ENCODE measurements at regions of chr6 and their contacts with region 1.

Region 1: GRCh38 chr6:110039364-110039980 is 61.4 kb downstream of the GPR6 start:
- DNase-seq: peak; percentile 63 to 89 (median 79)
- ATAC-seq: peak; percentile 70
- H3K4me3 ChIP-seq: peak overlapping the region; percentile 49 to 57
- H3K4me3 Mint-ChIP-seq: peak overlapping the region; percentile 89
- H3K27ac ChIP-seq: peak overlapping the region; percentile 39 to 75
- H3K27ac Mint-ChIP-seq: peak overlapping the region; percentile 95
- H3K4me1 ChIP-seq: peaks cover 9% of the 10 kb centered on the region
- H3K4me1 Mint-ChIP-seq: peaks cover 22% of the 10 kb centered on the region
- H3K27me3 ChIP-seq: no peaks in the 10 kb centered on the region
- H3K27me3 Mint-ChIP-seq: no peaks in the 10 kb centered on the region
- CTCF ChIP-seq: peak; percentile 75

Region 2: DNA sequence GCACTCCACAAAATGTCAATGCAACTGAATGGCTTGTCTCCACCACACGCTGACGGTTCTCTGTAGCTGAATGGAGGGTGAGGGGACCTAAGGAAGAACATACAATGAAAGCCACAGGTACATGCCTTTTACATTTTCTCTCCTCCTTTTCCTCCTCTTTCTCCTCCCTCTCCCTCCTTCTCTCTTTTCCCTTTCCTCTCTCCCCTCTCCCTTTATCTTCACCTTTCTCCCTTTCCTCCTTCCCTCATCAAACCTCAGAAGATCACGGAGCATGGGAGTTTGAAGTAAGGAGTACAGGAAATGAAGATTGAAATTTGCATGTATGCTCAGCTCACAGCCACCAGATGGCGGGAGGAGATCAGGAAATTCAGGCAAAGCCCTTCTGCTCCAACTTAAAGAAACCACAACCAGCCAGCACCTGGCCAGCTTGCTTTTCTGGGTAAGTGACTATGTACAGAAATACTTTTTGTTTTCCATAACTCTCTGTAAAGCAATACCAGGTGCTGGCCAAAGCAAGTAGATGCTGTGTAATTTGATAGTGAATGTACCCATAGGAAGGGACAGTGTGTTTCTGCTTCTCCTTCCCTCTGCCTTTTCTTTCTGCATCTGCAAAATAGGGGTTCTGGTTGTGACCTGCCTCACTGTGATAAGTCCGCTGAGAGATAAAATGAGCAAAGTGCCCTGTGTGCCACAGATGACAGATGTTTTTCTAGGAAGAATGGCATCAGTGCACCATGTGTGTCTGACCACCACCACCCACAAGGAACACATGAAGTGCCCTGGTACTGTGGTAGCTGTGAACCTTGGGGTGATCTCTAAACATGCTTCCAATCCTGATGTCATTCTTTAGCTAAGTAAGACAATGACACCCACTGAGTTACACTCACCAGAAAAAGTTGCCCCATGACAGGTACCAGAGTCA is 1497.4 kb before region 1 on chr6:
- CTCF ChIA-PET with region 1: no interaction called
- POLR2A ChIA-PET with region 1: no interaction called
- intact Hi-C with region 1: loop called in 1 of 2 experiments (anchors 5 kb)
- DNase-seq: peak; percentile 39 to 87 (median 69)
- ATAC-seq: peak; percentile 92
- H3K4me3 ChIP-seq: no peak overlapping the region
- H3K4me3 Mint-ChIP-seq: no peak overlapping the region
- H3K27ac ChIP-seq: no peak overlapping the region
- H3K27ac Mint-ChIP-seq: no peak overlapping the region
- H3K4me1 ChIP-seq: peaks cover 12% of the 10 kb centered on the region
- H3K4me1 Mint-ChIP-seq: peaks cover 16% of the 10 kb centered on the region
- H3K27me3 ChIP-seq: no peaks in the 10 kb centered on the region
- H3K27me3 Mint-ChIP-seq: no peaks in the 10 kb centered on the region
- CTCF ChIP-seq: peak; percentile 95

Region 3: DNA sequence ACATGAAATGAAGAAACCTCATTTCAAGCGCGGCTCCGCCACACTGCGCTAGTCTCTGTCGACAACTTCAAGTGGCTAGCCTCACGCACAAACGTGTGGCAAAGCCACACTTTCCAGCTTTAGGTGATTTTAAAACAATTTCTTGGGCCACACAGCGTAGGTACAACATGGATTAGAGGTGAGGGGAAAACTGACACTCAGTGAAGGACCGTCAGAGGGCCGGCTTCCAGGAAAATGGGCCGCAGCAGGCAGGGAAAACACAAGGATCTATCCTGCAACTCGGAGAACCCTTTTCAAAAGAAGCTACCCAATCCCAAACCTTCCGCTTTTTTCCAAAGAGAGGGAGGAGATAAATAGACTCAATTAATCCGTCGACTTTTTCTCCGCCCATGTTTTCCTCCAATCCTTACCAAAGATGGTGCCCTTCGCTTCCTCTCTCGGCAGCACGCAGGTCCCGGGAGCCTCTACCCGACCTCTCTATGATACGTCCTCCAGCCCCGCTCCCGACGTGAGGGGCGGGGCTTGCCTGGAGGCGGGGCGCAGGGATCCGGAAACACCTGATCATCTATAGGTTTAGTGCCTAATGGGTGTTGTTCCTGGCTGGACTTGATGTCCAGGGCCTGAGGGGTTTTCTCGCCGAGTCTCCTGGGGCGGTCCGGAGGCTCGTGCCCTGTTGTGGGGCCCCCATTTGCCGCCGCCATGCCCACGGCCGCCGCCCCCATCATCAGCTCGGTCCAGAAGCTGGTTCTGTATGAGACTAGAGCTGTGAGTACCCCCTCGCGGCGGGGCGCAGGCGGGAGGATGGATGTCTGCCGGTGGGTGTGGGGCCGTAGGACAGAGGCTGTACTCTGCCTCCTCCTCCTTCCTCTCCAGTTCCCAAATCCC is 348.5 kb before region 1 on chr6 and contains the starts of genes AK9 and FIG4:
- CTCF ChIA-PET with region 1: interaction called, 18 read pairs
- POLR2A ChIA-PET with region 1: interaction called, 12 read pairs
- intact Hi-C with region 1: no loop called
- DNase-seq: peak; percentile 68 to 93 (median 90)
- ATAC-seq: peak; percentile 96
- H3K4me3 ChIP-seq: peak within 1 kb of the TSS; percentile 85 to 91
- H3K4me3 Mint-ChIP-seq: peak within 1 kb of the TSS; percentile 93
- H3K27ac ChIP-seq: peak within 1 kb of the TSS; percentile 81 to 91
- H3K27ac Mint-ChIP-seq: peak within 1 kb of the TSS; percentile 98
- H3K4me1 ChIP-seq: peaks cover 22% of the 10 kb centered on the region
- H3K4me1 Mint-ChIP-seq: peaks cover 27% of the 10 kb centered on the region
- H3K27me3 ChIP-seq: no peaks in the 10 kb centered on the region
- H3K27me3 Mint-ChIP-seq: no peaks in the 10 kb centered on the region
- CTCF ChIP-seq: no peak
- total RNA-seq, gene AK9: 5.1 to 6.5 TPM
- total RNA-seq, gene FIG4: 2.3 TPM

Region 4: GRCh38 chr6:109713097-109713496 is 326.4 kb before region 1 on chr6:
- CTCF ChIA-PET with region 1: interaction called, 14 read pairs
- POLR2A ChIA-PET with region 1: no interaction called
- intact Hi-C with region 1: no loop called
- DNase-seq: no peak
- ATAC-seq: no peak
- H3K4me3 ChIP-seq: no peak overlapping the region
- H3K4me3 Mint-ChIP-seq: no peak overlapping the region
- H3K27ac ChIP-seq: no peak overlapping the region
- H3K27ac Mint-ChIP-seq: no peak overlapping the region
- H3K4me1 ChIP-seq: no peaks in the 10 kb centered on the region
- H3K4me1 Mint-ChIP-seq: peaks cover 13% of the 10 kb centered on the region
- H3K27me3 ChIP-seq: no peaks in the 10 kb centered on the region
- H3K27me3 Mint-ChIP-seq: no peaks in the 10 kb centered on the region
- CTCF ChIP-seq: no peak

Region 5: GRCh38 chr6:110029144-110029543 is 10.3 kb before region 1 on chr6:
- CTCF ChIA-PET with region 1: interaction called, 22 read pairs
- POLR2A ChIA-PET with region 1: no interaction called
- intact Hi-C with region 1: no loop called
- DNase-seq: no peak
- ATAC-seq: no peak
- H3K4me3 ChIP-seq: no peak overlapping the region
- H3K4me3 Mint-ChIP-seq: no peak overlapping the region
- H3K27ac ChIP-seq: no peak overlapping the region
- H3K27ac Mint-ChIP-seq: no peak overlapping the region
- H3K4me1 ChIP-seq: no peaks in the 10 kb centered on the region
- H3K4me1 Mint-ChIP-seq: no peaks in the 10 kb centered on the region
- H3K27me3 ChIP-seq: no peaks in the 10 kb centered on the region
- H3K27me3 Mint-ChIP-seq: no peaks in the 10 kb centered on the region
- CTCF ChIP-seq: no peak

Region 6: DNA sequence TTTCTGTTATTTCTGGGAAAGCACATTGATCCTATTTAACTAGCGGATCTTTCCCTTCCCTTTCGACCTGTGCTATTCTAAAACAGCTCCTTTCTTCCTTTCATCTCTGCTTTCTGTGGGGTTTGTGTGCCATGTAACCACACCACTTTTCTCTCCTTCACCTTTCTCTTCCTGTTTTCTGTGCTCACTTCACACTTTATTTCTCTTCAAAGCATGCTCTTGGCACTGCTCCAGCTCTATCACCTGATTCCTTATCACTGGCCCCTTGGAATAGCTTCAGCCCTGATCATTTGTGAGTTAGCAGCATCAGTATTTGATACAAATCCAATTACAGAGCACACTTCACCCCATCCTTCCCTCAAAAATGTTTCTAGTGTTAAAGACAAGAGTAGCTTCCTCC is 326.8 kb after region 1 on chr6:
- CTCF ChIA-PET with region 1: interaction called, 16 read pairs
- POLR2A ChIA-PET with region 1: no interaction called
- intact Hi-C with region 1: no loop called
- DNase-seq: peak in 2 of 9 experiments; percentile 42 to 58
- ATAC-seq: no peak
- H3K4me3 ChIP-seq: peak overlapping the region in 1 of 2 experiments; percentile 17
- H3K4me3 Mint-ChIP-seq: peak overlapping the region; percentile 49
- H3K27ac ChIP-seq: peak overlapping the region in 1 of 2 experiments; percentile 50
- H3K27ac Mint-ChIP-seq: peak overlapping the region; percentile 78
- H3K4me1 ChIP-seq: peaks cover 51% of the 10 kb centered on the region
- H3K4me1 Mint-ChIP-seq: peaks cover 54% of the 10 kb centered on the region
- H3K27me3 ChIP-seq: no peaks in the 10 kb centered on the region
- H3K27me3 Mint-ChIP-seq: no peaks in the 10 kb centered on the region
- CTCF ChIP-seq: no peak

Region 7: GRCh38 chr6:111967131-111967530 is 1927.7 kb after region 1 on chr6:
- CTCF ChIA-PET with region 1: no interaction called
- POLR2A ChIA-PET with region 1: no interaction called
- intact Hi-C with region 1: no loop called
- DNase-seq: no peak
- ATAC-seq: no peak
- H3K4me3 ChIP-seq: no peak overlapping the region
- H3K4me3 Mint-ChIP-seq: no peak overlapping the region
- H3K27ac ChIP-seq: no peak overlapping the region
- H3K27ac Mint-ChIP-seq: no peak overlapping the region
- H3K4me1 ChIP-seq: peaks cover 11% of the 10 kb centered on the region
- H3K4me1 Mint-ChIP-seq: peaks cover 14% of the 10 kb centered on the region
- H3K27me3 ChIP-seq: no peaks in the 10 kb centered on the region
- H3K27me3 Mint-ChIP-seq: no peaks in the 10 kb centered on the region
- CTCF ChIP-seq: no peak